GM12878 (cell line): ENCODE measurements at regions of chr12 and their contacts with region 1.

Region 1: DNA sequence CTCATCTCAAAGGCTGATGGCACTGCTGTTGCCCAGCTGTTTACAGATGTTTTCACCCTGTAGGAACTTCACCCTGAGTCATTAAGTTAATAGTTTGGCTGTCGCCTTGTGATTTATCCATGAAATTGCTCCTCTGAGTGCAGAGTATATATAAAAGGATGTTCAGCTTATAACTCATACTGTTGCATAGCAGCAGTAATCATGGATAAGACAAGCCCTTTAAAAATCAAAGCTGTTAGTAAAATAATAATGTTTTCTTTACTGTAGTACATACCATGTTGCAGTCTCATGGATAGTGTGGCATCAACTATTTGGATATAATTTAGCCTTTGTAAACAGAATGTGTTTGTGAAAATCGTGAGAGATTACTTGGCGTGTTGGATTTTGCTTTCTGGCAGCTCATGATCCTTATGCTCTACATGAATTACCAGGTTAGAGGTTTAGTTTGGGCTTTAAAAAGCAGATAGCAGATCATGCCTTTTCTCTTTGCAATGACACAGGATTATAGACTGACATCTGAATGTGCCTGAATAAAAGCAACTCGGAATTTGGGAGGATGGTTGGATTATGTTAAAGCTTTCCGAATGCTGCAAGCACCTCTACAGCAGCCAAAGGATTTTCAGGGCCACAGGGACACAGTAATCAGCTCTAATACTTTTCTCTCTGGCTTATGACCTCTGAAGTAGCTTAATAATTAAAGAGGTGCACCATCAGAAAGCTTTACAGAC is 279.7 kb upstream of the ATP2B1 start:
- DNase-seq: no peak
- ATAC-seq: no peak
- H3K4me3 ChIP-seq: no peak overlapping the region
- H3K27ac ChIP-seq: no peak overlapping the region
- H3K4me1 ChIP-seq: no peaks in the 10 kb centered on the region
- H3K27me3 ChIP-seq: no peaks in the 10 kb centered on the region
- CTCF ChIP-seq: no peak
- EP300 ChIP-seq: no peak
- POLR2A ChIP-seq: no peak
- RAD21 ChIP-seq: no peak

Region 2: DNA sequence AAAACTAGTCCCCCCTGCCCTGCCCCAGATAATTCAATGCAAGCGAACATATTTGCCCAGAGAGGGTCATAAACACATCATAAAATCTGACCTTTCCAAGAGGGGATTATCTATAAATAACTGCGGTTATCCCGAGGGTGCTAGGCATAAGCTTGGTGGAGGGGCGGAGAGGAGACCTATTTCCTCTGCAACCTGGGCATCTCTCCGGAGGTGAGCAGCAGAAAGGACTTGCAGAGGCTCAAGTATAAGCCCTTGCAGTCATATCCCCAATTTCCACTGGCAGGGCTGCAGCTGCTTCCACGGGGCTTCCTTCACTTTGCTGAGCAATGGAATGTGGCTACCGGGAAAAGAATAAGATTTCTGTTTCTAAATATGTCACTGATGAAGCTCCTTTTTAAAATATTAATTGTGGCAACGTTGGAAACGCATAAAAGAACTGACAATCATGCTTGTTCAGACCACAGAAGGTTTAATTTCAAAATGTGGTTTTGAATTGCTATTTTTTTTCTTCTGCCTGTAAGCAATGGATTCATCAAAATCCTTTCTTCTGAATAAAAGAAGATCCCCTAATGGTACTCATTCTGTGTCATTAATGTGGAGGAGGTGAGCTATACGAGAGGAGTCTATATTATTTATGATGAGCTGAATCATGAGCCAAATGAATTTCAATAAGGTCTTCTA is 10.8 kb before region 1 on chr12:
- CTCF ChIA-PET with region 1: interaction called, 5 read pairs
- POLR2A ChIA-PET with region 1: no interaction called
- RAD21 ChIA-PET with region 1: no interaction called
- SMC1A ChIA-PET with region 1: interaction called, 22 read pairs
- in situ Hi-C with region 1: no loop called
- intact Hi-C with region 1: no loop called
- DNase-seq: no peak
- ATAC-seq: no peak
- H3K4me3 ChIP-seq: no peak overlapping the region
- H3K27ac ChIP-seq: no peak overlapping the region
- H3K4me1 ChIP-seq: no peaks in the 10 kb centered on the region
- H3K27me3 ChIP-seq: no peaks in the 10 kb centered on the region
- CTCF ChIP-seq: no peak
- EP300 ChIP-seq: no peak
- POLR2A ChIP-seq: no peak
- RAD21 ChIP-seq: no peak

Region 3: DNA sequence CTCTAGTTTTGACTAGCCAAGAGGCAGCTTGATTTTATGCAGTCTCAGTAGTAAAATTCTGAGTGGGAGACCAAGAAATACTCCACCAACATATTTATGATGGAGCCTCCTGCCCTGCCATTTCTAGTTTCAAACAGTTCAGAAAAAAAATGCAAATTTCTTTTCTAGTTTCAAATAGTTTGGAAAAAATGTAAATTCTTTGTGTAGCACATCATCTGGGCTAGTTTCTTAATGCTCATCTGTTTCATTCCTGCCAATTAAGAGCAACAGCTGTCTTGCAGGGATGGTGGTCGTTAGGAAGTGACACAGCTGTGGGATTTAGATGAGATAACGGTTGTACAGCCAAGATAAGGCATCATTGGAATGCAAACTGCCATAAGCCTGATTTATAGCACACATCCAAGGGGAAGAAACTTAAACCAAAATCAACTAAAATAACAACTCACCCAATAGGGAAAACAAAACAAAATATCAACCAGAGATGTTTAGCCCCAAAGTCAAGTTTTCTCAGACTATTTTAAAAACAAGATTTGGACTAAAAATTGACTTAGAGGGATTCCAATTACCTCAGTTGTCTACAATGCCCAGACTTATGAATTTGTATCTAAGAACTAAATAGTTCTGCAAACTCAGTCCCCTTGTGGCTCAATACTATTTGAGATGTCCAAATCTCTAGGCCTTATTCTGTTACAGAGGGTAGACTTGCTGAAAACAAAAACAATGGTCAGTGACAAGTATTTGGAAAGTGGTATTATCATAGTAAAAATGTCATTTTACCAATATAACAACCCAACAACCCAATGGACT is 11.6 kb after region 1 on chr12:
- CTCF ChIA-PET with region 1: interaction called, 3 read pairs
- POLR2A ChIA-PET with region 1: no interaction called
- RAD21 ChIA-PET with region 1: interaction called, 3 read pairs
- SMC1A ChIA-PET with region 1: interaction called, 18 read pairs
- in situ Hi-C with region 1: no loop called
- intact Hi-C with region 1: no loop called
- DNase-seq: no peak
- ATAC-seq: peak; percentile 65
- H3K4me3 ChIP-seq: no peak overlapping the region
- H3K27ac ChIP-seq: no peak overlapping the region
- H3K4me1 ChIP-seq: peaks cover 5% of the 10 kb centered on the region; the same call in 1 of the 2 replicates
- H3K27me3 ChIP-seq: no peaks in the 10 kb centered on the region
- CTCF ChIP-seq: no peak
- EP300 ChIP-seq: no peak
- POLR2A ChIP-seq: no peak
- RAD21 ChIP-seq: no peak